H1 (cell line): ENCODE measurements at regions of chr17 and their contacts with region 1.

Region 1: DNA sequence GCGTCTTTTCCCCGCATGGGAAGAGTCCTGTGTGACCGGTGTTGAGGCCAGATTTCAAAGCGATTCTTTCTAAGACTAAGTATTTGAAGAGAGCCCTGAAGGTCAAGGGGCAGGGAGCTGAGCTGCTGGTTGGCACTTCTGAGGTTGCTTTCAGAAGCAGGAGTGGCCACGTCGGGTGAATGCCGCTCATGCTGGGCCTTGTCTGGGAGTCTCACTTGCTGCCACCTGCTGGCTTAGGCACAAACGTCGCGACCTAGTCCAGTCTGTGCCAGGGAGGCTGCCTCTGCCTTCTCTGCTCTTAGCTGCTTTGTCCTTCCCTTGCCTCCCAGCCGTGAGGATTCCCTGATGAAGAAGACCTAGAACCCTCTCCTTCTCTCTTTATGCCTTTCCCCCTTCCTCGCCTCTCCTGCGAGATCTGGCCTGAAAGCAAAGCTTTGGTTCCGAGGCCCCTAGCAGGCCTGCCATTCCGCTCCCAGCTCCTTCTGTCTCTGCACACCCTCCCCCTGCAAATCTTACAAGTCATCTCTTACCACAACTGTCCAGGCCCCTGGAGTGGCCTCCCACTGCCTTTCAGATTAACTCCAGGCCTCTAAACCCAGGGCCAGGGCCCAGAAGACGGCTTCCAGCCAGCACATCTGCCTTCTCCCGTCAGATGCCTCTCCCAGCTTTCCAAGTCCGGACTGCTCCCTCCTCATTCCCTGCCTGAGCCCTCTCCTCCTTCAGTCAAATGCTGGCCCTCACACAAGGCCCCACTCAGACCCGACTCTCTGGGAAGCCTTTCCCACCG is 11.4 kb downstream of the CTNS start:
- DNase-seq: peak in 1 of 2 experiments; percentile 69
- H3K4me3 ChIP-seq: no peak overlapping the region
- H3K27ac ChIP-seq: no peak overlapping the region
- H3K4me1 ChIP-seq: no peaks in the 10 kb centered on the region
- H3K27me3 ChIP-seq: no peaks in the 10 kb centered on the region; a peak in 1 of 7 replicates
- CTCF ChIP-seq: peak; percentile 58 to 76 (median 68)
- EP300 ChIP-seq: no peak
- POLR2A ChIP-seq: no peak
- RAD21 ChIP-seq: peak; percentile 47 to 63

Region 2: DNA sequence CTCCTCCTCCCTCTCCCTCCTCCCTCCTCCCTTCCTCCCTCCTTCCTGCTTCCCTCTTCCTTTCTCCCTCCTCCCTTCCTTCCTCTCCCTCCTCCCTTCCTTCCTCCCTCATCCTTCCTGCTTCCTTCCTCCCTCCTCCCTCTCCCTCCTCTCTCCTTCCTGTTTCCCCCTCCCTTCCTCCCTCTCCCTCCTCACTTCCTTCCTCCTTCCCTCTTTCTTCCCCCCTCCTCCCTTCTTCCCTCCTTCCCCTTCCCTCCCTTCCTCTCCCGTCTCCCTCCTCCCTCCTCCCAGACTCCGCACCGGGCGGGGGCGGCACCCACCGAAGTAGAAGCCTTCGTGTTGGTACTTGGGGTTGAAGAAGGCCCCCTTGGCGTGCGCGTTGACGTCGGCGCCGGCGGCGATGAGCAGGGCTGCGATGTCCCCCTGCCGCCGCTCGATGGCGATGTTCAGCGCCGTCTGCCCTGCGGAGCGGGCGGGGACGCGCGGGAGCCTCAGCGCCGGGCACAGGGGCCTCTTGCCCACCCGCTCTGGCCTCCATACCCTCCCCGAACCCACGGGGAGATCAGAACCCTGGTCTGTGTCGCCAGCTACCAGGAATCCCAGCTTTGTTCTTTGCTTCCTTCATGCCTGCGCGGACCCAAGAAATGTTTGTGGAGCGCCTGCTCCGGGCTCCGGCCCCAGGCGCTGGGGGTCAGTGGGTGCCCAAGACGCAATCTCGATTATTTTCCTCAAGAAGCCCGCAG is 112.5 kb before region 1 on chr17:
- CTCF ChIA-PET with region 1: interaction called, 10 read pairs
- POLR2A ChIA-PET with region 1: no interaction called
- DNase-seq: peak; percentile 70 to 90
- H3K4me3 ChIP-seq: peak overlapping the region; percentile 24 to 63 (median 54); a peak in 6 of 8 replicates
- H3K27ac ChIP-seq: no peak overlapping the region
- H3K4me1 ChIP-seq: peaks cover 0 to 10% (median 4%) of the 10 kb centered on the region in 4 experiments; a peak in 6 of 7 replicates
- H3K27me3 ChIP-seq: no peaks in the 10 kb centered on the region
- CTCF ChIP-seq: peak; percentile 75 to 92 (median 87)
- EP300 ChIP-seq: no peak; a peak in 1 of 3 replicates
- POLR2A ChIP-seq: peak in 1 of 2 experiments; percentile 49; a peak in 1 of 3 replicates
- RAD21 ChIP-seq: peak; percentile 66 to 78

Region 3: DNA sequence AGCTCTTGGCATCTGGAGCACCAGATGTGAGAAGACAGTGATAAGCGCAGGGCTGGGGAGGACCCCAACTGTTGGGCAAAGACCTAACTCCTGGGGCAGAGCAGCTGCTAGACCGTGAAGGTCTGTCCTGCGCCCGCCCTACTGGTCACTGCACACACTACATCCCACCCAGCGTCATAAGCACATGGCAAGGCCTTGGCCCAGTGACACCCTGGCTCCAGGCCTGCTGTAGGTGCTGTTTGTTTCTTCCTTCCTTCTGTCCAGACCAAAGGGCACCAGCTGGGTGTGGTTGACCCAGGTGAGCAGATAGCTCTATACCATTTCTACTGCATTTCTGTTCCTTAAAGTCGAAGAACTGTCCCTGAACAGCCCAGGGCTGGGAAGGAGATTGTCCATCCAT is 96.8 kb before region 1 on chr17:
- CTCF ChIA-PET with region 1: no interaction called
- POLR2A ChIA-PET with region 1: no interaction called
- DNase-seq: no peak
- H3K4me3 ChIP-seq: no peak overlapping the region
- H3K27ac ChIP-seq: no peak overlapping the region
- H3K4me1 ChIP-seq: no peaks in the 10 kb centered on the region
- H3K27me3 ChIP-seq: no peaks in the 10 kb centered on the region
- CTCF ChIP-seq: peak in 2 of 3 experiments; percentile 44 to 48; a peak in 2 of 4 replicates
- EP300 ChIP-seq: no peak
- POLR2A ChIP-seq: no peak
- RAD21 ChIP-seq: peak in 1 of 2 experiments; percentile 30; a peak in 1 of 4 replicates

Region 4: DNA sequence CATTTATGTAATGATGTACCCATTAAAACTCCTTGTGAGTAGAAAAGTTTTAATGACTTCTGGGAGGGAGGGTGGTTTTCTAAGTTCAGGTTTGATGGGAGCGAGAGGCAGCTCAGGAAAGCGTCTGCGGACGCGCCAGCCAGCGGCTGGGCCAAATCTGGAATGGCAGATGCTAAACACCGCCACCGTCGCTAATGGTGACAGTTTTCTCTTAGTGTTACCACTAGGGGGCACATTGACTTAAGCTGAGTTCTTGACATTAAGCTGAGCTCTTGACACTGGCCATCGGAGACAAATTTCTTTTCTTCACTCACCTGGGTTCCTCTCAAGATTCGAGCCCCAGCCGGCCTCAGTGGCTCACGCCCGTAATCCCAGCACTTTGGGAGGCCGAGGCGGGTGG is 45.5 kb before region 1 on chr17:
- CTCF ChIA-PET with region 1: interaction called, 17 read pairs
- POLR2A ChIA-PET with region 1: interaction called, 8 read pairs
- DNase-seq: peak in 1 of 2 experiments; percentile 64
- H3K4me3 ChIP-seq: no peak overlapping the region
- H3K27ac ChIP-seq: no peak overlapping the region
- H3K4me1 ChIP-seq: no peaks in the 10 kb centered on the region
- H3K27me3 ChIP-seq: no peaks in the 10 kb centered on the region
- CTCF ChIP-seq: peak; percentile 40 to 80 (median 80)
- EP300 ChIP-seq: no peak
- POLR2A ChIP-seq: no peak
- RAD21 ChIP-seq: peak; percentile 42 to 67

Region 5: DNA sequence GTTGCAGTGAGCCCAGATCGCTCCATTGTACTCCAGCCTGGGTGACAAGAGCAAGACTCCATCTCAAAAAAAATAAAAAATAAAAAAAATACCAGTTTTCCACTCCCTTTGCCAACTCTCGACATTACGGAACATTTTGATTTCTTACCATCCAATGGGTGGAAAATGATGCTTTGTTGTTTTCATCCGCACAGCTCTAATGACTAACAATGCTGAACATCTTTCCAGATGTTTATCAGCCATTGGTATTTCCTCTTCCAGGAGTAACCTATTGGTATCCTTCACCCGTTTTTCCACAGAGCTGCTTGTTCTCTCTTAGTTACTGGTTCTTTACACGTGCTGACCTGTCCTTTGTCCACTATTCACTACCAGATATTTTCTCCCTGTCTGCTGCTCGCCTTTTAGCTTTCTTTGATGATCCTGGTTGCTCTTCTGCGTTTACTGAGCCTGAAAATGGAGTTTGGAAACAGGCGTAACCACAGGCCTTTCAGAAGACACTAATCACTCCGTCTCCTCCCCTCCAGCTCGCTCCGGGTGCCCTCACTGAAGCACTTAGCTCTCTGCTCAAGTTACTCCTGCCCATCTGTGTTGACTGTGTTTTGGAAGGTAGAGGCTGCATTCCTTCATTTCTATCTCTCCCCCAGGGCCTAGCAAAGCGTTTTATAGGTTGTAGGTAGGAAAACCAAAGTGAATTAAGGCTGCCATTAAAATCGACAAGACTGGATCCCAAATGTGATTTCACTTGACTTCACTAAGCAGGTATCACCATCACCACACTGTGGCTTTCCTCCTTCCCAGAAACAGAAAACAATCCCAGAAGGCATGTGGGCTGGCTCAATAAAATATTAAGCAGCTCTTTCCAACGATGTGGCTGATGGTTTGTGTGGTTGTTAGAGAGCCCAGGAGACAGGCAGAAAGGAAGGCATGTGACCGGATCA is 20.9 kb before region 1 on chr17:
- CTCF ChIA-PET with region 1: interaction called, 10 read pairs
- POLR2A ChIA-PET with region 1: interaction called, 3 read pairs
- DNase-seq: no peak
- H3K4me3 ChIP-seq: no peak overlapping the region
- H3K27ac ChIP-seq: no peak overlapping the region
- H3K4me1 ChIP-seq: no peaks in the 10 kb centered on the region
- H3K27me3 ChIP-seq: no peaks in the 10 kb centered on the region
- CTCF ChIP-seq: no peak
- EP300 ChIP-seq: no peak
- POLR2A ChIP-seq: no peak
- RAD21 ChIP-seq: no peak

Region 6: DNA sequence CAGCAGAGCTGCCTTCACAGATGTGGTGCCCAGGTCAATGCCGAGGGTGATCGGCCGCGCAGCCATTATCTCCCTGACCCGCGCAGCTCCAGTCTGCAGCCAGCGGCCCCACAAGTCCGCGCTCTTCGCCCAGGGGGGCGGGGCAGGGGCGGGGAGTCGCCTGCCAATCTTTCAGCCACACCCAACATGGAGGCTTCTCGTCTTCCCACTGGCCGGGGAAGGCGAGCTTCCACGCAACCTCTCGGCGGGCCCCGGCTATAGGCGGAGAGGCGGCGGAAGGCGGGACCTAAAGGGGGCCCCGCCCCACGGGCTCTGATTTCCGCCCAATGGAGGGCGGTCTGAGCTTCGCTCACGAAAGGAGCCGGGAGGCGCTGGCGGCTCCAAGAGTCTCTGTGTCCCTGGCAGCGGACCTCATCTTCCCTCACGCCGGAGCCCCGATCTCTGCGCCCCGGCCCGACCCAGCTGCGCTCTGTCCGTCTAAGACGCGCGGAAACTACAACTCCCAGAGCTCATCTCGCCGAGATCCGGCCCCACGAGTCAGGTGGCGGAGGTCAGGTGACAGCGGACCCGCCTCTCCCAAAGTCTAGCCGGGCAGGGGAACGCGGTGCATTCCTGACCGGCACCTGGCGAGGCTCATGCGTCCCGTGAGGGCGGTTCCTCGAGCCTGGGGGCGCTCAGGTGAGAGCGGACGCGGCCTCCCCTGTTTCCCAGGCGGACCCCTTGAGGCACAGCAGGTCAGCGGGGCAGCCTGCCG is 11.6 kb before region 1 on chr17 and contains the starts of genes CTNS and SHPK:
- CTCF ChIA-PET with region 1: interaction called, 8 read pairs
- POLR2A ChIA-PET with region 1: interaction called, 19 read pairs
- DNase-seq: peak; percentile 82 to 95
- H3K4me3 ChIP-seq: peak within 1 kb of the TSS; percentile 87 to 95 (median 88)
- H3K27ac ChIP-seq: peak within 1 kb of the TSS; percentile 96
- H3K4me1 ChIP-seq: peaks cover 0 to 8% (median 5%) of the 10 kb centered on the region in 4 experiments; a peak in 3 of 7 replicates
- H3K27me3 ChIP-seq: no peaks in the 10 kb centered on the region
- CTCF ChIP-seq: no peak
- EP300 ChIP-seq: no peak
- POLR2A ChIP-seq: peak; percentile 55 to 66
- RAD21 ChIP-seq: no peak; a peak in 1 of 4 replicates
- total RNA-seq, gene CTNS: 12.9 and 16.4 TPM in 2 replicates
- total RNA-seq, gene SHPK: 36.7 and 37.3 TPM in 2 replicates

Region 7: DNA sequence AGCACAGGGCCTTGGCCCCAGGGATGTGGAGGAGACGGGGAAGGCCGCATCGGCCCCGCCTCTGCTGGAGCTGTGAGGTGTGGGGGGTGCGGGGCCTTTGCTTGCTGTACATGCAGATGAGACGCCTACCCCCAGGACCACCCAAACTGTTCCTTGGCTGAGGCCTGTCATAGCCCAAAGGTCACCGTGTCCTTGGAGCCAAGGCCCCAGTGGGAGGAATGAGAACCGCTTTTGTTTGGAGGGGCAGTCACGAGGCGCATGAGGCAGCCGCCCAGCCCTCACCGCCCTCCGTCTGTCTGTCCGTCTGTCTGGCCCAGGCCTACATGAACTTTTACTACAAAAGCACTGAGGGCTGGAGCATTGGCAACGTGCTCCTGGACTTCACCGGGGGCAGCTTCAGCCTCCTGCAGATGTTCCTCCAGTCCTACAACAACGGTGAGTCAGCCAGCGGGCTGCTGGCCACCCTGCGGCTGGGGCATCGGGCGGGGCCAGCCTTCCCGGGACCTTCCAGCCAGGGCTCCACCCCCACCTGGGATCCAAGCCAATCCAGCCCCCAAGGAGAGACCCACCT is 11.7 kb after region 1 on chr17:
- CTCF ChIA-PET with region 1: interaction called, 20 read pairs
- POLR2A ChIA-PET with region 1: interaction called, 194 read pairs
- DNase-seq: no peak
- H3K4me3 ChIP-seq: no peak overlapping the region
- H3K27ac ChIP-seq: no peak overlapping the region
- H3K4me1 ChIP-seq: peaks cover 0 to 3% (median 1%) of the 10 kb centered on the region in 4 experiments; a peak in 3 of 7 replicates
- H3K27me3 ChIP-seq: no peaks in the 10 kb centered on the region
- CTCF ChIP-seq: no peak
- EP300 ChIP-seq: no peak
- POLR2A ChIP-seq: peak in 1 of 2 experiments; percentile 40; a peak in 1 of 3 replicates
- RAD21 ChIP-seq: no peak

Region 8: GRCh38 chr17:3668279-3669085 is 20.5 kb after region 1 on chr17 and contains the starts of genes EMC6 and TAX1BP3:
- CTCF ChIA-PET with region 1: interaction called, 9 read pairs
- POLR2A ChIA-PET with region 1: interaction called, 194 read pairs
- DNase-seq: peak; percentile 95 to 100
- H3K4me3 ChIP-seq: peak within 1 kb of the TSS; percentile 79 to 94 (median 84)
- H3K27ac ChIP-seq: peak within 1 kb of the TSS; percentile 90
- H3K4me1 ChIP-seq: peaks cover 3 to 7% (median 5%) of the 10 kb centered on the region in 4 experiments
- H3K27me3 ChIP-seq: no peaks in the 10 kb centered on the region
- CTCF ChIP-seq: no peak
- EP300 ChIP-seq: no peak
- POLR2A ChIP-seq: peak; percentile 88 to 91
- RAD21 ChIP-seq: no peak
- total RNA-seq, gene EMC6: 81.5 and 86.5 TPM in 2 replicates
- total RNA-seq, gene TAX1BP3: 81.8 and 83.5 TPM in 2 replicates